Dorsolateral prefrontal cortex (tissue), 120 donors: ENCODE measurements at regions of chr15 and their contacts with region 1.

Region 1: DNA sequence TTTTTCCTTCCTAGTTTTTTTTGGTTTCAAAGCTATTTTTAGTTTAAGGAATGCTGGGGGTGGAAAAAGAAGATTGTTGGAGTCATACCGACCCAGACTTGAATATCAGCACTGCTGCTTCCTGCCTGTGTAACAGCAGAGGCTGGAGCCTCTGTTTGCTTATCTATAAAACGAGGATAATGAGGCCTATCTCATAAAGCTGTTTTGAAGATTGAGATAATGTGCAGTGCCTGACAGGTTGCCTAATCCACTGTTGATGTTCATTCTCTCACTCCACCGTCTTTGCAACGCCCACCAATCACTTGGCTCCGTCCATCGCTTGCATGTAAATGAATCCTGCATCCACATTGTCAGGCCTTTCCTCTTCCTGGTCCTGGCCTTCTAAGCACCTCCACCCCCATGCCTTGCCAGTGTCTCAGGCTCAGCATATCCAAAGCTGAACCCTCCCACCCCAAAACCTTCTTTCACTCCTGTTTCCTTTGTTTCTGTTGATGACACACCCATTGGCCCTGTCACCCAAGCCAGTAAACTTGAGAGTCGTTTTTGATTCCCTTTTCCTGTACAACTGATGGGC is 94.9 kb downstream of the MEX3B start:
- DNase-seq: no peak
- H3K4me3 ChIP-seq: no peak overlapping the region
- H3K27ac ChIP-seq: no peak overlapping the region
- H3K27me3 ChIP-seq: peaks cover 0 to 5% (median 0%) of the 10 kb centered on the region in 45 donors
- CTCF ChIP-seq: no peak

Region 2: GRCh38 chr15:82018201-82018600 is 67.3 kb after region 1 on chr15:
- intact Hi-C with region 1: loop called in 1 of 2 experiments (anchors 10 kb)
- DNase-seq: no peak
- H3K4me3 ChIP-seq: no peak overlapping the region
- H3K27ac ChIP-seq: no peak overlapping the region
- H3K27me3 ChIP-seq: peaks cover 0 to 13% (median 0%) of the 10 kb centered on the region in 45 donors
- CTCF ChIP-seq: no peak